Uterus (tissue), 4 donors: ENCODE measurements at regions of chr1 and their contacts with region 1.

Region 1: DNA sequence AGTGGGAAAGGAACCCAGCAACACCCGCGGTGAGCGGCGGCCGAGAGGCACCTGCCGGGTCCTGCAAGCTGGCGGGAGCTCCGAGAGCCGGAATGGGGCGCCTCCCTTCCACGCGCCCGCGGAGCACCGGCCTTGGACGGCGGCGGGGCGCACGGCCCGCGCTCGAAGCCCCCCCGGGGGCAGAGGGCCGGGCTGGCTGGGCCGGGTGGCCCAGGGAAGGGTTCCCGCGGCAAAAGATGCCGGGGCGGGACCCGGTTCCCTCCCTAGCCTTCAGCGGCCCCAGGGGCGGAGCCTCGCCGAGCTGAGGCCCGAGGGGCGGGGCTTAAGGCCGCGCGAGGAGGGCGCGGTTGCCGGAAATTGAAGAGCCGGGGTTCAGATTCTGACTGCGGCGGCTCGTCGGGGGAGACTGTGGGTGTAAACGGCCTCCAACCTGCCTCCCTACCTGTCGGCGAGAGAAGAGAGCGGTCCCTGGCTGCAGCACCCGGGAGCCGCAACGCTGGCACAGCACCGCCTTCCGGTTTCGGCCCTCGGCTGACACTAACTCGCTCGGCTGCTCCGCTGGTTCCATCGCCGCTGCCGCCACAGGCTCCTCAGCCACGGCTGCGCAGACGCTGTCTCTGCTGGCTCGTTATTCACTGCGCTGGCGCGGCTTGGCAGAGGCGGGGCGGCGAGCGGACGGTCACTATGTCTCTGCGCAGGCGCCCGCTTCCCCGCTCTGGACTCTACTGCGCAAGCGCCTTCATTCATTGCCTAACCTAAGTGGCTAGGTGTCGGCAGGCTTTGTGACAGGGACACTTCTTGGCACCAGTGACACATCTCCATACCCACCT is at the start of gene RABIF:
- DNase-seq: peak; percentile 94 to 98
- H3K4me3 ChIP-seq: peak within 1 kb of the TSS; percentile 70 to 88
- H3K27ac ChIP-seq: peak within 1 kb of the TSS; percentile 87 to 97
- H3K4me1 ChIP-seq: no peaks in the 10 kb centered on the region
- H3K27me3 ChIP-seq: no peaks in the 10 kb centered on the region
- CTCF ChIP-seq: peak in 2 of 4 experiments; percentile 25 to 50
- POLR2A ChIP-seq: peak; percentile 64 to 92
- total RNA-seq, gene RABIF: 3.8 to 7.6 (median 6.0) TPM

Region 2: GRCh38 chr1:202745323-202745888 is 143.3 kb before region 1 on chr1:
- intact Hi-C with region 1: no loop called
- DNase-seq: no peak
- H3K4me3 ChIP-seq: no peak overlapping the region
- H3K27ac ChIP-seq: no peak overlapping the region
- H3K4me1 ChIP-seq: no peaks in the 10 kb centered on the region
- H3K27me3 ChIP-seq: no peaks in the 10 kb centered on the region
- CTCF ChIP-seq: no peak
- POLR2A ChIP-seq: no peak

Region 3: GRCh38 chr1:202807926-202808757 is 80.6 kb before region 1 on chr1 and contains the start of gene KDM5B:
- intact Hi-C with region 1: loop called (anchors 5 kb)
- DNase-seq: peak; percentile 69 to 76
- H3K4me3 ChIP-seq: peak within 1 kb of the TSS; percentile 73 to 84
- H3K27ac ChIP-seq: peak within 1 kb of the TSS; percentile 86 to 92
- H3K4me1 ChIP-seq: no peaks in the 10 kb centered on the region
- H3K27me3 ChIP-seq: no peaks in the 10 kb centered on the region
- CTCF ChIP-seq: no peak
- POLR2A ChIP-seq: peak; percentile 47 to 85
- total RNA-seq, gene KDM5B: 21.8 to 180 (median 47.1) TPM

Region 4: GRCh38 chr1:203084588-203085502 is 196.1 kb after region 1 on chr1:
- intact Hi-C with region 1: no loop called
- DNase-seq: no peak
- H3K4me3 ChIP-seq: no peak overlapping the region
- H3K27ac ChIP-seq: no peak overlapping the region
- H3K4me1 ChIP-seq: no peaks in the 10 kb centered on the region
- H3K27me3 ChIP-seq: no peaks in the 10 kb centered on the region
- CTCF ChIP-seq: no peak
- POLR2A ChIP-seq: no peak